ENCODE measurements at regions of chr12 and their contacts with region 1.

Region 1: DNA sequence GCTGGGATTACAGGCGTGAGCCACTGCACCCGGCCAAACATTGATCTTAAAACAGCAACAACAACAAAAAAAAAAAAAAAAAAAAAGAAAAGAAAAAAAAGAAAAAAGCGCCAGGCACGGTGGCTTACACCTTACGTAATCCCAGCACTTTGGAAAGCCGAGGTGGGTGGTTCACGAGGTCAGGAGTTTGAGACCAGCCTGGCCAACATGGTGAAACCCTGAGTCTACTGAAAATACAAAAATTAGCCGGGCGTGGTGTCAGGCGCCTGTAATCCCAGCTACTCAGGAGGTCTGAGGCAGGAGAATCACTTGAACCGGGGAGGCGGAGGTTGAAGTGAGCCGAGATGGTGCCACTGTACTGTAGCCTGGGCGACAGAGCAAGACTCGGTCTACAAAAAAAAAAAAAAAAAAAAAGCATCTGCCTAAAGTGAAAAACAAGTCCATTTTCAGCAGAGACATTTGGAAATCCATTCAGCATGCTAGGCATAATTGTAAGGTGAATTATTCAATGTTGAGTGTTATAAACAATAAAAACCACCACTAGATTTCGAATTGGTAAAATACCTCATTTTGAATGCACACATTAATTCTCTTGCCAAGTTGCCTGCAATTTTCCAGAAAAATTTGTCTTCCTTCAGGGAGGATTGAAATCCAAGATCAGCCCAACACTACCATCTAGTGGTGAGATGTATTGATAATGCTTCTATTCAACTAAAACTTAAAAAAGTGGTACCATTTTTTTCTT is 8.0 kb upstream of the CERS5 start:
- DNase-seq: peak in 3 of 9 experiments; percentile 25 to 79 (median 73)
- ATAC-seq: peak; percentile 38
- H3K4me3 ChIP-seq: no peak overlapping the region
- H3K4me3 Mint-ChIP-seq: no peak overlapping the region
- H3K27ac ChIP-seq: no peak overlapping the region
- H3K27ac Mint-ChIP-seq: no peak overlapping the region
- H3K4me1 ChIP-seq: no peaks in the 10 kb centered on the region
- H3K4me1 Mint-ChIP-seq: no peaks in the 10 kb centered on the region
- H3K27me3 ChIP-seq: no peaks in the 10 kb centered on the region
- H3K27me3 Mint-ChIP-seq: no peaks in the 10 kb centered on the region
- CTCF ChIP-seq: peak; percentile 93

Region 2: DNA sequence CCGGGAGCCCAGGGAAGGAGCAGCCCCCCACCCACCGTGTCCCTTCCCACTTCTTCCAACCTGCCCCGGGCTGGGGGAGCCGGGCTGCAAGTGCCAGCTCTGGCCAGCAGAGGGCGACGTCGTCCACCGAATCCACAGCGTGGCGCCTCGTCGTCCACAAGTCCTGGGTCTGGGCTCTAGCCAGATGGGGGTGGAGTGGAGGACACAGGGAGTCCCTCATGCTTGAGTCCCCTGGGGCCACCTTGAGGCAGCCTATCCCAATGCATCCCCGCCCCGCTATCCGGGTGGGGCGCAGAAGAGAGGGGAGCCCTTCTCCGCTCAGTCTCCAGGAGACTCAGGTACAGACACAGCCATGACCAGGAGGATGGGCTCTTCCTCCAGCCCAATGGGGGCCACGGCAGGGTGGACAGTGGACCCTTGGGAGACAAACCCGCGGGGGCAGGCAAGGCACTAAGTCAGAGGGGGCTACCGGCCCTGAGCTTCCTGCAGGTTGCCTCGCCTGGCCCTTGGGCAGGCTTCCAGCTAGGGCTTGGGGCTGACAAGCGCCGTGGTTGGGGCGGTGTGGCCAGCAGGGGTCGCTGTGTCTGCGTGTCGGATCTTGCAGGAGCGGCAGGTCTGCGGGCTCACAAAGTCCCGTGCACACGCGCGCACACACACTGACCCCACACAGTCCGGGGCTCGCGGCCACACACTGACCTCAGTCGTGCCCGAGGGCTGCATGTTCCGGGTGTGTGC is 207.9 kb before region 1 on chr12:
- CTCF ChIA-PET with region 1: interaction called, 8 read pairs
- POLR2A ChIA-PET with region 1: no interaction called
- intact Hi-C with region 1: loop called (anchors 2 kb)
- DNase-seq: peak; percentile 87 to 98 (median 91)
- ATAC-seq: peak; percentile 88
- H3K4me3 ChIP-seq: peak overlapping the region; percentile 52 to 59
- H3K4me3 Mint-ChIP-seq: peak overlapping the region; percentile 74
- H3K27ac ChIP-seq: no peak overlapping the region
- H3K27ac Mint-ChIP-seq: no peak overlapping the region
- H3K4me1 ChIP-seq: peaks cover 9% of the 10 kb centered on the region
- H3K4me1 Mint-ChIP-seq: peaks cover 6% of the 10 kb centered on the region
- H3K27me3 ChIP-seq: peaks cover 4 to 14% of the 10 kb centered on the region in 2 experiments
- H3K27me3 Mint-ChIP-seq: peaks cover 41% of the 10 kb centered on the region
- CTCF ChIP-seq: peak; percentile 98

Region 3: DNA sequence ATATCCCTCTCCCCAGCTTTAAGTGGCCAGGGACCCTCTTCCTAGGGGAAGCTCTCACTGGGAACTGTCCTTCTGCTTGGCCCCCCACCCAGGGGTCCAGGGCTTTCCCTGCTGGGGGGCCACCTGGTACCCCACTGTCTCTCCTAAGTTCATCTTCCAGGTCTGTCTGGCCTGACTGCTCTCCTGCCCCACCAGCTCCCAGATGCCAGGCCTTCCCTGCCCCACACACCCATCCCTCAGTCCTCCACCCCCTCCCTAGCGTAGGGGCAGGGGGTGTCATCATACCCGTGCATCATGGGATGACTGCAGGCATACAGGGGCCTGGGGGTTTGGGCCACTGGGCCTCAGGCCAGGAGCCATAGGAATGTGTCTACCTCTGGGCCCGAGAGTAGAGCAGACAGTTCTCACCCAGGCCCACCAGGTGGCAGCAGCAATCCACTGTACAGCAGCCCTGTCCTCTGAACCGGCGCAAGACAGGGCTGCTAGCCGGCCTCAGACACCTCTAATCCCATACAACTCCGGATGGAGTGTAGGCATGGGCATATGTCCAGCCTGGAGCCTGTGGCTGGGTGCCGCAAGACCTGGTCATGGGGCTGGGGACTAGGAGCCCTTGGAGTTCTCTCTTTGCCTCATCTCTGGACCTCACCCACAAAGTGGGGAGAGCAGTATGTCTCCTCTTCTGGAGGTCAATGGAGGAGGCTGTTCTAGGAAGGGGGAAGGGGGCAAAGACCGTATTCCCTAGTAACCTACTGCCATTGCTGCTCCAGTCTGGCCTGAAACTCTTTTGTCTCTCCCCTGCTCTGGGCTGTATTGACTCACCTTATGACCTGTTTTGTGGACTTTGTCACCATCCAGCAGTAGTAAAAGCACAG is 100.0 kb before region 1 on chr12:
- CTCF ChIA-PET with region 1: interaction called, 176 read pairs
- POLR2A ChIA-PET with region 1: no interaction called
- intact Hi-C with region 1: loop called (anchors 1 kb)
- DNase-seq: peak; percentile 71 to 89 (median 80)
- ATAC-seq: peak; percentile 98
- H3K4me3 ChIP-seq: no peak overlapping the region
- H3K4me3 Mint-ChIP-seq: no peak overlapping the region
- H3K27ac ChIP-seq: no peak overlapping the region
- H3K27ac Mint-ChIP-seq: no peak overlapping the region
- H3K4me1 ChIP-seq: peaks cover 6% of the 10 kb centered on the region
- H3K4me1 Mint-ChIP-seq: peaks cover 8% of the 10 kb centered on the region
- H3K27me3 ChIP-seq: no peaks in the 10 kb centered on the region
- H3K27me3 Mint-ChIP-seq: no peaks in the 10 kb centered on the region
- CTCF ChIP-seq: peak; percentile 88

Region 4: GRCh38 chr12:50103767-50104321 is 71.3 kb before region 1 on chr12 and contains the start of gene GPD1:
- CTCF ChIA-PET with region 1: interaction called, 56 read pairs
- POLR2A ChIA-PET with region 1: no interaction called
- intact Hi-C with region 1: no loop called
- DNase-seq: no peak
- ATAC-seq: peak; percentile 64
- H3K4me3 ChIP-seq: no peak within 1 kb of the TSS
- H3K4me3 Mint-ChIP-seq: no peak within 1 kb of the TSS
- H3K27ac ChIP-seq: no peak within 1 kb of the TSS
- H3K27ac Mint-ChIP-seq: no peak within 1 kb of the TSS
- H3K4me1 ChIP-seq: no peaks in the 10 kb centered on the region
- H3K4me1 Mint-ChIP-seq: no peaks in the 10 kb centered on the region
- H3K27me3 ChIP-seq: no peaks in the 10 kb centered on the region
- H3K27me3 Mint-ChIP-seq: no peaks in the 10 kb centered on the region
- CTCF ChIP-seq: no peak
- total RNA-seq, gene GPD1: 0.24 to 0.50 TPM

Region 5: GRCh38 chr12:50127546-50127945 is 47.6 kb before region 1 on chr12:
- CTCF ChIA-PET with region 1: interaction called, 30 read pairs
- POLR2A ChIA-PET with region 1: no interaction called
- intact Hi-C with region 1: loop called (anchors 1 kb)
- DNase-seq: no peak
- ATAC-seq: no peak
- H3K4me3 ChIP-seq: no peak overlapping the region
- H3K4me3 Mint-ChIP-seq: no peak overlapping the region
- H3K27ac ChIP-seq: no peak overlapping the region
- H3K27ac Mint-ChIP-seq: no peak overlapping the region
- H3K4me1 ChIP-seq: peaks cover 11% of the 10 kb centered on the region
- H3K4me1 Mint-ChIP-seq: peaks cover 34% of the 10 kb centered on the region
- H3K27me3 ChIP-seq: no peaks in the 10 kb centered on the region
- H3K27me3 Mint-ChIP-seq: no peaks in the 10 kb centered on the region
- CTCF ChIP-seq: no peak

Region 6: DNA sequence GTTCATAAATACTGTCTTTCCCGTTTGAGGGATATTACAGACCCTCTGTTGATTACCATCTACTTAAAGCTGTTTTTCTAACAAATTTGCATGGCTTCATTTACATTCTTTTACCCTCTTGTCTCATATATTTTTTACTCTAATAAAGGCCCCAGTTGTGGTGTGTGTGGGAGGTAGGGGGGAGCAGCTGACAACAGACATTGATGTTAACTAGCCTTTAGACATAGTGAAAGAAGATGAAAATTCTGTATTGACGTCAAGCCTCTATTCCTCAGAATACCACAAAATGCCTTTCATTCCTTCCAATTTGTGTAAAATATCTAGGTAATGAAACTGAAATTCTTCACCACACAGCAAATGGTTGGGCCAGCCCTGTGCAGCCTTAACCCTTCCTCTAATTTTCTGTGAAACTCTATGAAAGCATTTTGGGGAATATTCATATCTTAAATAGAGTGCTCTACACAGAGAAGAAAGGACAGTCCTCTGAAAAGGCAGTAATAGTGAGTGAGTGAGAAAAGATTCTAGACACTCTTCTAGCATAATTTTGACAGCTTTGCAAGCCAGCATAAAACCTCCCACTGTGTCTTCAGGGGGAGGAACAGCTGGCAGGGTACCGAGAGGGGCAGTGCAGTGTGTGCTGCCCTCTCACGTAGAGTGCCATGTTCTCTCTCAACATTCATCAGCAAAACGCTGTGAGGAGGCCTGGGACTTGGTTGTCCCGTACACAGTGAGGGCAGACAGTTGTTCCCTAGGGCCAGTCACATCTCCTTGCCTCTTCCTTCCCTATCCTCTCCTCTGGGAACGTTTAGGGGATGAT is 12.1 kb after region 1 on chr12:
- CTCF ChIA-PET with region 1: interaction called, 11 read pairs
- POLR2A ChIA-PET with region 1: no interaction called
- intact Hi-C with region 1: no loop called
- DNase-seq: no peak
- ATAC-seq: no peak
- H3K4me3 ChIP-seq: no peak overlapping the region
- H3K4me3 Mint-ChIP-seq: no peak overlapping the region
- H3K27ac ChIP-seq: no peak overlapping the region
- H3K27ac Mint-ChIP-seq: no peak overlapping the region
- H3K4me1 ChIP-seq: no peaks in the 10 kb centered on the region
- H3K4me1 Mint-ChIP-seq: peaks cover 9% of the 10 kb centered on the region
- H3K27me3 ChIP-seq: no peaks in the 10 kb centered on the region
- H3K27me3 Mint-ChIP-seq: no peaks in the 10 kb centered on the region
- CTCF ChIP-seq: no peak

Region 7: GRCh38 chr12:50569321-50569720 is 394.2 kb after region 1 on chr12:
- CTCF ChIA-PET with region 1: no interaction called
- POLR2A ChIA-PET with region 1: no interaction called
- intact Hi-C with region 1: no loop called
- DNase-seq: no peak
- ATAC-seq: no peak
- H3K4me3 ChIP-seq: no peak overlapping the region
- H3K4me3 Mint-ChIP-seq: no peak overlapping the region
- H3K27ac ChIP-seq: peak overlapping the region in 1 of 2 experiments; percentile 2
- H3K27ac Mint-ChIP-seq: no peak overlapping the region
- H3K4me1 ChIP-seq: peaks cover 14% of the 10 kb centered on the region
- H3K4me1 Mint-ChIP-seq: peaks cover 63% of the 10 kb centered on the region
- H3K27me3 ChIP-seq: no peaks in the 10 kb centered on the region
- H3K27me3 Mint-ChIP-seq: no peaks in the 10 kb centered on the region
- CTCF ChIP-seq: no peak

Measured in CD8-positive, alpha-beta T cell (primary cell).